Caco-2 (cell line): ENCODE measurements at regions of chr12 and their contacts with region 1.

Region 1: DNA sequence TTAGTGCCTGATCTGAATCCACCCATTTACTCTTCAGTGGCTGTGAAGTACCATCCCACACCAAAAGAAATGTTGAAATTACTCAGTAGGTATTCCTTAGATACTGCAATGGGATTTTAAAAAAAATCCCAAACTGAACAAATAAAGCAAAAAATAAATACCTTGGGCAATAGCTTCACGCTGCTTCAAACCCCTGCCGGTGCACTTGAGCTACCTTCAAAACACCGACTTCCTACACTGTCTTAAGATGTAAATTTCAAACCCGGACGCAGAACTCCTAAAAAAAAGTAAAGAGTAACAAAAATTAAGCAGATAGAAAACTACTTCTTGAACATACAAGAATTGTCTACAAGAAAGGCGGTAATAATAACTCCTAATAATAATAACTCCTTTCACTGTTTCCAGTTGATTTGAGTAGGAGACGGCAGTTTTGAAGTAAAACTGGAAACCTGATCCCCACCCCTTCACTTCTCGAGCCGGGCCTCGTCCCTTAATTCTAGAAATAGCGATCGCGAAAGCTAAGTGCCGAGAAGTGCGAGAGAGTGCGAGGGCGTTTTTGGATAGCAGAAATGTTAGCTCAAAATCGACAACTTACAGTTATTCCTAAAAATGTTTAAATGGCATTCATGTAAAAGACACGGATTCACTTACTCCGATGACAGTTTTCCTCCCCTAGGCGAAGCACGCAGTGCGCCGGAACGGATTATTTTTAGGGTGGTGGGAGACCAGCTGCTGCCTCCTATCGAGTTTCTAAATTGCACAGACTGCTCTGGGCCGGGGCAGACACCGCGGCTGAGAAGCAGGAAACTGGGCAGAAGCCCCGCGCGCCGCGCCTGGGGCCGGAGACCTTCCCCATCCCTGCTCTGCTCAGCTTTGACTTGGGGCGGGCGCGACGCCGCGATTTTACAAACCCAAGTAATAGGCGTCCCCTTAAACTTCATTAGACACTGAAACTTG is at the start of gene ABCC9:
- DNase-seq: peak; percentile 77 to 83
- H3K4me3 ChIP-seq: peak within 1 kb of the TSS; percentile 56
- H3K4me3 Mint-ChIP-seq: peak within 1 kb of the TSS; percentile 94
- H3K27ac Mint-ChIP-seq: peak within 1 kb of the TSS; percentile 95
- H3K4me1 ChIP-seq: no peaks in the 10 kb centered on the region
- H3K4me1 Mint-ChIP-seq: peaks cover 17% of the 10 kb centered on the region
- H3K27me3 ChIP-seq: no peaks in the 10 kb centered on the region
- H3K27me3 Mint-ChIP-seq: no peaks in the 10 kb centered on the region
- CTCF ChIP-seq: peak in 1 of 2 experiments; percentile 15
- total RNA-seq, gene ABCC9: 123 and 130 TPM in 2 replicates

Region 2: DNA sequence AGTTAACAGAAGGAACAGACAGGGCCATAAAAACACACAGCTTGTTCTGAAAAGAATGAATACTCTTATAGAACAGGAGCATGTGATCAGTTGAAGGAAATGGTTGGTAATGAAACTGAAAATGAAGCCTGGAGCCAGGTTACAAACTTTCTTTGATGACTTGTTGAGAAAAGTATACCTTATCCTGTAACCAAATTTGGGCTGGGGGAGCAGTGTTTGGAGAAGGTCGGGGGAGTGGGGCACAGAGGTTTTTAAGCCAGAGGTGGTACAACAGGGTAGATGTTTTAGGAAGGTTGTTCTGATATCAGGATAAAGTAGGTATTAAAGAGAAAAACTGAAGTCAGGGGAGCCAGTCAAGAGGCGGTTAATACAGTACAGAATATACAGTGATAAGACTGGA is 431.1 kb before region 1 on chr12:
- CTCF ChIA-PET with region 1: no interaction called
- POLR2A ChIA-PET with region 1: no interaction called
- intact Hi-C with region 1: loop called (anchors 5 kb)
- DNase-seq: no peak
- H3K4me3 ChIP-seq: no peak overlapping the region
- H3K4me3 Mint-ChIP-seq: no peak overlapping the region
- H3K27ac Mint-ChIP-seq: no peak overlapping the region
- H3K4me1 ChIP-seq: no peaks in the 10 kb centered on the region
- H3K4me1 Mint-ChIP-seq: no peaks in the 10 kb centered on the region
- H3K27me3 ChIP-seq: no peaks in the 10 kb centered on the region
- H3K27me3 Mint-ChIP-seq: no peaks in the 10 kb centered on the region
- CTCF ChIP-seq: no peak

Region 3: DNA sequence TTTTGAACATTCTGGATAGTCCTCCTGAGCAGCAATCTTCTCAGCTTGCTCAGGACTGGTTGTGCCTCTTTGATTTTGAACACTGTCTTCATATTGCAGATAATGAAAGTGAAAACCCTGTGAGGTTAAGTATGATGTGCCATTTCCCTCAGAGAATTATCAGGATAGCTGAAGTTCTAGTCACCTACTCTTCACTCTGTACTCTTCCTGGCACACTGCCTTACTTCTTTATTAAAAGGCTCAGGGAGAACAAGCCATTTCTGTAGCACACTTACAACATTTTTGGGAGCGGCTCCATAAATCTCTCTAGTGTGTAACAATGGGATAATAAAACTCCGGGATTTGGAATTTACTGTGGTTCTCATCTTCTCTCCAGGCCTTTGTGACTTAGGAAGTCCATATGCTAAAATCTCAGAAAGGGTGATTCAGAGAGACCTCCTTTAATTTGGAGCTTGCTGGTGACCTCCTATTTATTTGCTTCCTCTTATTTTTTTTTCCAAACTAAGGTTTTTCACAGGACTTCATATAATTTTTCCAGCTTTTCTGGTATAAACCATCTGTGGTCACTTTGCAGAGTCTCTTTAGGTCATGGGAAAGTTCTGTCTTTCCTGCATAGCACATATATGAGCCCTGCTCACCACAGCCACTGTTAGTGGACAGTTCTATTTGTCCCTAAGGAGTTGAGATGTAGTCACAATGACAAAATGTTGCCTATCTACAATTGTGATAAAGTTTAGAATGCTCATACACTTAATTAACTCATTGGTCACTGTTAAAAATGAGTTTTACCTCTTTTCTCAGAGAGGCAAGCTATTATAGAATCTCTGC is 229.7 kb before region 1 on chr12:
- CTCF ChIA-PET with region 1: interaction called, 11 read pairs
- POLR2A ChIA-PET with region 1: interaction called, 3 read pairs
- intact Hi-C with region 1: no loop called
- DNase-seq: no peak
- H3K4me3 ChIP-seq: no peak overlapping the region
- H3K4me3 Mint-ChIP-seq: no peak overlapping the region
- H3K27ac Mint-ChIP-seq: no peak overlapping the region
- H3K4me1 ChIP-seq: peaks cover 8% of the 10 kb centered on the region; the same call in 1 of the 2 replicates
- H3K4me1 Mint-ChIP-seq: peaks cover 15% of the 10 kb centered on the region
- H3K27me3 ChIP-seq: no peaks in the 10 kb centered on the region
- H3K27me3 Mint-ChIP-seq: no peaks in the 10 kb centered on the region
- CTCF ChIP-seq: no peak

Region 4: GRCh38 chr12:21788089-21788983 is 152.5 kb before region 1 on chr12:
- CTCF ChIA-PET with region 1: no interaction called
- POLR2A ChIA-PET with region 1: no interaction called
- intact Hi-C with region 1: no loop called
- DNase-seq: no peak
- H3K4me3 ChIP-seq: no peak overlapping the region
- H3K4me3 Mint-ChIP-seq: no peak overlapping the region
- H3K27ac Mint-ChIP-seq: no peak overlapping the region
- H3K4me1 ChIP-seq: no peaks in the 10 kb centered on the region
- H3K4me1 Mint-ChIP-seq: peaks cover 7% of the 10 kb centered on the region
- H3K27me3 ChIP-seq: no peaks in the 10 kb centered on the region
- H3K27me3 Mint-ChIP-seq: no peaks in the 10 kb centered on the region
- CTCF ChIP-seq: no peak

Region 5: DNA sequence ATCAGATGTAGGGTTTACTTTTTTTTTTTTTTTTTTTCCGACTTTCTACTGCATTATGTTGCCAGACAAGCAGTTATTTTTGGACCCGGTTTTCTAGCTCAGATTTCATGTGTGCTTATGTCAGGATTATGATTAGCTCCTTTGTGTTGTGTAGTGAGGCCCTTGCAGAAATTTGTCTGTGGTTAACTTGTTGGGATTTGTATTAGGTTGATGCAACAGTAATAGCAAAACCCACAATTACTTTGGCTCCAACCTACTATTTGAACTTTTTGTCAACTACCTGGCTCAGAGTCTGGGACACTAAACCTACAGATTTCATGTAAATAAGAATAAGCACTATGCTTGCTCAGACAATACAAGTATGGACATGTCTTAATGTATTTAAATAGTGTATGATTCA is 122.2 kb before region 1 on chr12:
- CTCF ChIA-PET with region 1: interaction called, 5 read pairs
- POLR2A ChIA-PET with region 1: interaction called, 3 read pairs
- intact Hi-C with region 1: loop called (anchors 1 kb)
- DNase-seq: peak in 1 of 2 experiments; percentile 57
- H3K4me3 ChIP-seq: no peak overlapping the region
- H3K4me3 Mint-ChIP-seq: peak overlapping the region; percentile 61
- H3K27ac Mint-ChIP-seq: peak overlapping the region; percentile 94
- H3K4me1 ChIP-seq: peaks cover 78% of the 10 kb centered on the region
- H3K4me1 Mint-ChIP-seq: peaks cover 55% of the 10 kb centered on the region
- H3K27me3 ChIP-seq: no peaks in the 10 kb centered on the region
- H3K27me3 Mint-ChIP-seq: no peaks in the 10 kb centered on the region
- CTCF ChIP-seq: no peak

Region 6: DNA sequence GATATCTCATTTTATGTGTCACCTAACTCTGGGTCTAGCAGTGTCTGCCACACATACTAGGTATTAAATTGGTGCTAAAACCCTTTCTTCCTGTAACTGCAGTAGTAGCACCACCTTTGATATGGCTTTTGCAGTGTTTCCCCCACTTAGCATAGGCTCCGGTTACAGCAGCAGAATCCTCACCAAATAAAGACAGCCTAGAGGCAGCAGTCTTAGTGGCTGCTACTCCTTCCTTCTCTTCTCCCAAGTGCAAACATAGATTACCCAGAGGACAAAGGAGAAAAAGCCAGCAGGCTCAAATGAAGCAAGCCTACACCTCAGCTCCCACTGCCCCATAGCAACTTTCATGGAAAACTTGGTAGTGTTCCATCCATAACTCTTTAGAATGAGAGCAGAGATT is 30.5 kb after region 1 on chr12:
- CTCF ChIA-PET with region 1: no interaction called
- POLR2A ChIA-PET with region 1: interaction called, 3 read pairs
- intact Hi-C with region 1: loop called (anchors 1 kb)
- DNase-seq: peak in 1 of 2 experiments; percentile 16
- H3K4me3 ChIP-seq: no peak overlapping the region
- H3K4me3 Mint-ChIP-seq: no peak overlapping the region
- H3K27ac Mint-ChIP-seq: peak overlapping the region; percentile 1
- H3K4me1 ChIP-seq: peaks cover 9% of the 10 kb centered on the region
- H3K4me1 Mint-ChIP-seq: peaks cover 10% of the 10 kb centered on the region
- H3K27me3 ChIP-seq: no peaks in the 10 kb centered on the region
- H3K27me3 Mint-ChIP-seq: no peaks in the 10 kb centered on the region
- CTCF ChIP-seq: no peak

Region 7: GRCh38 chr12:22046090-22046967 is 105.5 kb after region 1 on chr12 and contains the start of gene CMAS:
- CTCF ChIA-PET with region 1: no interaction called
- POLR2A ChIA-PET with region 1: no interaction called
- intact Hi-C with region 1: loop called (anchors 5 kb)
- DNase-seq: peak; percentile 84 to 86
- H3K4me3 ChIP-seq: peak within 1 kb of the TSS; percentile 98
- H3K4me3 Mint-ChIP-seq: peak within 1 kb of the TSS; percentile 93
- H3K27ac Mint-ChIP-seq: peak within 1 kb of the TSS; percentile 87
- H3K4me1 ChIP-seq: peaks cover 62% of the 10 kb centered on the region
- H3K4me1 Mint-ChIP-seq: peaks cover 68% of the 10 kb centered on the region
- H3K27me3 ChIP-seq: no peaks in the 10 kb centered on the region
- H3K27me3 Mint-ChIP-seq: no peaks in the 10 kb centered on the region
- CTCF ChIP-seq: no peak
- total RNA-seq, gene CMAS: 70.4 and 80.7 TPM in 2 replicates

Region 8: GRCh38 chr12:22215467-22216253 is 274.8 kb after region 1 on chr12:
- CTCF ChIA-PET with region 1: no interaction called
- POLR2A ChIA-PET with region 1: no interaction called
- intact Hi-C with region 1: no loop called
- DNase-seq: no peak
- H3K4me3 ChIP-seq: no peak overlapping the region
- H3K4me3 Mint-ChIP-seq: no peak overlapping the region
- H3K27ac Mint-ChIP-seq: no peak overlapping the region
- H3K4me1 ChIP-seq: no peaks in the 10 kb centered on the region
- H3K4me1 Mint-ChIP-seq: no peaks in the 10 kb centered on the region
- H3K27me3 ChIP-seq: no peaks in the 10 kb centered on the region
- H3K27me3 Mint-ChIP-seq: peaks cover 4% of the 10 kb centered on the region
- CTCF ChIP-seq: no peak